Panc1 (cell line): ENCODE measurements at regions of chr16 and their contacts with region 1.

Region 1: GRCh38 chr16:84878781-84879180 is 59.0 kb downstream of the CRISPLD2 start:
- DNase-seq: no peak
- ATAC-seq: no peak
- H3K4me3 ChIP-seq: no peak overlapping the region
- H3K27ac ChIP-seq: no peak overlapping the region
- H3K4me1 ChIP-seq: no peaks in the 10 kb centered on the region
- H3K27me3 ChIP-seq: no peaks in the 10 kb centered on the region
- CTCF ChIP-seq: no peak

Region 2: DNA sequence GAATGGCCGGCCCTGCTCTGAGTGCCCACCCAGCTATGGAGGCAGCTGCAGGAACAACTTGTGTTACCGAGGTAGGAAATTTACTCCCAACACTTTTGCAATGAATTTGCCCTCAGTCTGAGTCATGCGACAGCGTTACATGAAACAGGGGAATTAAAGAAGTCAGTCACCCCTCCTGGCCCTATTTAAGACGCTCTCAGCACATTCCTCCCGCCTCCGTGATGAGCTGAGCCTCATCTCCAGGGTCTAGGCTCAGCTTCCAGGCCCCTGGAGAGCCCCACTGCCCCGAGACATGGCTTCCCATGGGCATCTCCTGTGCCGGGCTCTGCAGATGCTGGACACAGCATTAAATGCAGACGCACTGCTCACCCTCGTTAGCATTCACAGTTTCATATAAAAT is 24.0 kb before region 1 on chr16:
- CTCF ChIA-PET with region 1: no interaction called
- POLR2A ChIA-PET with region 1: no interaction called
- in situ Hi-C with region 1: no loop called
- intact Hi-C with region 1: no loop called
- DNase-seq: no peak
- ATAC-seq: no peak
- H3K4me3 ChIP-seq: no peak overlapping the region
- H3K27ac ChIP-seq: no peak overlapping the region
- H3K4me1 ChIP-seq: peaks cover 21% of the 10 kb centered on the region
- H3K27me3 ChIP-seq: no peaks in the 10 kb centered on the region
- CTCF ChIP-seq: no peak

Region 3: DNA sequence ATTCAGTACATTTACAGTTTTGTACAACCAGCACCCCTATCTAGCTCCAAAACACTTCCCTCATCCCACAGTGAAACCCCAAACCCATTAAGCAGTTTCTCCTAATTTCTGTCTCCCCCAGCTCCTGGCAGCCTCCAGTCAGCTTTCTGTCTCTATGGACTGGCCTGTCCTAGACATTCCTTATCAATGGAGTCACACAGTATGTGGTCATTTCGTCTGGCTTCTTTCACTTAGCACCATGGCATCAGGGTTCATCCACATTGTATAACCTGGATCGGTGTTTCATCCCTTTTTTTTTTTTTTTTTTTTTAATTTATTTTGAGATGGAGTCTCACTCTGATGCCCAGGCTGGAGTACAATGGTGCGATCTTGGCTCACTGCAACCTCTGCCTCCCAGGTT is 64.0 kb after region 1 on chr16:
- CTCF ChIA-PET with region 1: no interaction called
- POLR2A ChIA-PET with region 1: interaction called, 14 read pairs
- in situ Hi-C with region 1: no loop called
- intact Hi-C with region 1: no loop called
- DNase-seq: no peak
- ATAC-seq: no peak
- H3K4me3 ChIP-seq: no peak overlapping the region
- H3K27ac ChIP-seq: no peak overlapping the region
- H3K4me1 ChIP-seq: no peaks in the 10 kb centered on the region
- H3K27me3 ChIP-seq: no peaks in the 10 kb centered on the region
- CTCF ChIP-seq: no peak

Region 4: GRCh38 chr16:85123891-85124635 is 245.3 kb after region 1 on chr16:
- CTCF ChIA-PET with region 1: no interaction called
- POLR2A ChIA-PET with region 1: no interaction called
- in situ Hi-C with region 1: no loop called
- intact Hi-C with region 1: no loop called
- DNase-seq: no peak
- ATAC-seq: peak; percentile 52
- H3K4me3 ChIP-seq: no peak overlapping the region
- H3K27ac ChIP-seq: 0 out of 2 replicates have a peak overlapping the region, but pooled peaks have one; percentile 34
- H3K4me1 ChIP-seq: peaks cover 15% of the 10 kb centered on the region
- H3K27me3 ChIP-seq: no peaks in the 10 kb centered on the region
- CTCF ChIP-seq: no peak